CD8-positive, alpha-beta T cell (primary cell): ENCODE measurements at regions of chr6 and their contacts with region 1.

Region 1: GRCh38 chr6:99868074-99868702 is 125.8 kb downstream of the MCHR2 start:
- DNase-seq: peak; percentile 32 to 83 (median 69)
- ATAC-seq: no peak
- H3K4me3 ChIP-seq: no peak overlapping the region
- H3K4me3 Mint-ChIP-seq: no peak overlapping the region
- H3K27ac ChIP-seq: no peak overlapping the region
- H3K27ac Mint-ChIP-seq: no peak overlapping the region
- H3K4me1 ChIP-seq: no peaks in the 10 kb centered on the region
- H3K4me1 Mint-ChIP-seq: no peaks in the 10 kb centered on the region
- H3K27me3 ChIP-seq: no peaks in the 10 kb centered on the region
- H3K27me3 Mint-ChIP-seq: peaks cover 33% of the 10 kb centered on the region
- CTCF ChIP-seq: peak; percentile 81

Region 2: DNA sequence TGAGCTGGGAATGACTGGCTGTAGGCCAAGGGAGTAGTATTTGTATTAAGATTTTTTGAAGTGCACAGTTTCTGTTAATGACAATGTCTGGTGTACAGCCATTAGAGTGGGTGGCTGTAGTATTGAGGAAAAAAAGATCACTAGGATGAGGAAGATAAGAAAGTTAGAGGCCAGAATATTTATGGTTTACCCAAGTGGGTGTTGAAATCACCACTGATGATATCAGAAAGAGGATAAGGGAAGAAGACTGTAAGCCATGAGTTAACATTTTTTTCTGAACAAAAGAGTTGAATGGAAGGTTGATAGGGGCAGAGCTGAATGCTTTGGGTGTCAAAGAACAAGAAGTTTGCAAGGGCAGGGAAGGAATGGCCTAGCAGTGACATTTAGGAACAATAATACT is 156.9 kb before region 1 on chr6:
- CTCF ChIA-PET with region 1: no interaction called
- POLR2A ChIA-PET with region 1: no interaction called
- intact Hi-C with region 1: no loop called
- DNase-seq: no peak
- ATAC-seq: no peak
- H3K4me3 ChIP-seq: no peak overlapping the region
- H3K4me3 Mint-ChIP-seq: no peak overlapping the region
- H3K27ac ChIP-seq: no peak overlapping the region
- H3K27ac Mint-ChIP-seq: no peak overlapping the region
- H3K4me1 ChIP-seq: no peaks in the 10 kb centered on the region
- H3K4me1 Mint-ChIP-seq: no peaks in the 10 kb centered on the region
- H3K27me3 ChIP-seq: no peaks in the 10 kb centered on the region
- H3K27me3 Mint-ChIP-seq: peaks cover 8% of the 10 kb centered on the region
- CTCF ChIP-seq: no peak

Region 3: DNA sequence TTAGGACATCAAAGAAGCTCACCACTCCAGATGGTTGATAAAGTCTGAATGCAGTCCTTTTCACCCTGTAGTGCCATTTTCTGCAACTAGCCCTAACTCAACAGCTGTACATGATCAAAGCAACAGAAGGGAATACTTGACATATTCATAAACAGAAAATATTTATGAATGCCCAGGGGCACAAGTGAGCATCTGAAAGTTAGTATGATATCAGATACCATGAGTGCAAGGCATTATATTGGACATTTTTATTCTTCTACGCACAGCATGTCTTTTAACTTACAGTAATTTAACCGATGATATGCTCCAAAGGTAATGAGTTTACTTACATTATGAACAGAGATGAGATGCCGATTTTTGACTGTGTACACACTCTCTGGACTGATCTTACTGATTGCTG is 16.2 kb before region 1 on chr6:
- CTCF ChIA-PET with region 1: interaction called, 12 read pairs
- POLR2A ChIA-PET with region 1: no interaction called
- intact Hi-C with region 1: no loop called
- DNase-seq: no peak
- ATAC-seq: no peak
- H3K4me3 ChIP-seq: no peak overlapping the region
- H3K4me3 Mint-ChIP-seq: no peak overlapping the region
- H3K27ac ChIP-seq: no peak overlapping the region
- H3K27ac Mint-ChIP-seq: no peak overlapping the region
- H3K4me1 ChIP-seq: no peaks in the 10 kb centered on the region
- H3K4me1 Mint-ChIP-seq: no peaks in the 10 kb centered on the region
- H3K27me3 ChIP-seq: peaks cover 0 to 2% of the 10 kb centered on the region in 2 experiments
- H3K27me3 Mint-ChIP-seq: peaks cover 35% of the 10 kb centered on the region
- CTCF ChIP-seq: no peak

Region 4: GRCh38 chr6:99882128-99882702 is 14.0 kb after region 1 on chr6:
- CTCF ChIA-PET with region 1: interaction called, 46 read pairs
- POLR2A ChIA-PET with region 1: interaction called, 3 read pairs
- intact Hi-C with region 1: no loop called
- DNase-seq: peak in 2 of 9 experiments; percentile 17 to 41
- ATAC-seq: peak; percentile 62
- H3K4me3 ChIP-seq: no peak overlapping the region
- H3K4me3 Mint-ChIP-seq: no peak overlapping the region
- H3K27ac ChIP-seq: no peak overlapping the region
- H3K27ac Mint-ChIP-seq: no peak overlapping the region
- H3K4me1 ChIP-seq: peaks cover 5% of the 10 kb centered on the region
- H3K4me1 Mint-ChIP-seq: peaks cover 16% of the 10 kb centered on the region
- H3K27me3 ChIP-seq: no peaks in the 10 kb centered on the region
- H3K27me3 Mint-ChIP-seq: peaks cover 3% of the 10 kb centered on the region
- CTCF ChIP-seq: no peak

Region 5: GRCh38 chr6:99905209-99906106 is 37.3 kb after region 1 on chr6:
- CTCF ChIA-PET with region 1: interaction called, 53 read pairs
- POLR2A ChIA-PET with region 1: interaction called, 4 read pairs
- intact Hi-C with region 1: loop called (anchors 1 to 2 kb)
- DNase-seq: peak in 2 of 9 experiments; percentile 39 to 44
- ATAC-seq: no peak
- H3K4me3 ChIP-seq: no peak overlapping the region
- H3K4me3 Mint-ChIP-seq: no peak overlapping the region
- H3K27ac ChIP-seq: no peak overlapping the region
- H3K27ac Mint-ChIP-seq: no peak overlapping the region
- H3K4me1 ChIP-seq: no peaks in the 10 kb centered on the region
- H3K4me1 Mint-ChIP-seq: no peaks in the 10 kb centered on the region
- H3K27me3 ChIP-seq: peaks cover 0 to 3% of the 10 kb centered on the region in 2 experiments
- H3K27me3 Mint-ChIP-seq: peaks cover 6% of the 10 kb centered on the region
- CTCF ChIP-seq: peak; percentile 37

Region 6: GRCh38 chr6:100099189-100100074 is 231.2 kb after region 1 on chr6:
- CTCF ChIA-PET with region 1: interaction called, 17 read pairs
- POLR2A ChIA-PET with region 1: no interaction called
- intact Hi-C with region 1: loop called in 1 of 2 experiments (anchors 2 kb)
- DNase-seq: peak in 1 of 9 experiments; percentile 17
- ATAC-seq: no peak
- H3K4me3 ChIP-seq: no peak overlapping the region
- H3K4me3 Mint-ChIP-seq: no peak overlapping the region
- H3K27ac ChIP-seq: no peak overlapping the region
- H3K27ac Mint-ChIP-seq: no peak overlapping the region
- H3K4me1 ChIP-seq: no peaks in the 10 kb centered on the region
- H3K4me1 Mint-ChIP-seq: no peaks in the 10 kb centered on the region
- H3K27me3 ChIP-seq: no peaks in the 10 kb centered on the region
- H3K27me3 Mint-ChIP-seq: peaks cover 4% of the 10 kb centered on the region
- CTCF ChIP-seq: peak; percentile 12

Region 7: DNA sequence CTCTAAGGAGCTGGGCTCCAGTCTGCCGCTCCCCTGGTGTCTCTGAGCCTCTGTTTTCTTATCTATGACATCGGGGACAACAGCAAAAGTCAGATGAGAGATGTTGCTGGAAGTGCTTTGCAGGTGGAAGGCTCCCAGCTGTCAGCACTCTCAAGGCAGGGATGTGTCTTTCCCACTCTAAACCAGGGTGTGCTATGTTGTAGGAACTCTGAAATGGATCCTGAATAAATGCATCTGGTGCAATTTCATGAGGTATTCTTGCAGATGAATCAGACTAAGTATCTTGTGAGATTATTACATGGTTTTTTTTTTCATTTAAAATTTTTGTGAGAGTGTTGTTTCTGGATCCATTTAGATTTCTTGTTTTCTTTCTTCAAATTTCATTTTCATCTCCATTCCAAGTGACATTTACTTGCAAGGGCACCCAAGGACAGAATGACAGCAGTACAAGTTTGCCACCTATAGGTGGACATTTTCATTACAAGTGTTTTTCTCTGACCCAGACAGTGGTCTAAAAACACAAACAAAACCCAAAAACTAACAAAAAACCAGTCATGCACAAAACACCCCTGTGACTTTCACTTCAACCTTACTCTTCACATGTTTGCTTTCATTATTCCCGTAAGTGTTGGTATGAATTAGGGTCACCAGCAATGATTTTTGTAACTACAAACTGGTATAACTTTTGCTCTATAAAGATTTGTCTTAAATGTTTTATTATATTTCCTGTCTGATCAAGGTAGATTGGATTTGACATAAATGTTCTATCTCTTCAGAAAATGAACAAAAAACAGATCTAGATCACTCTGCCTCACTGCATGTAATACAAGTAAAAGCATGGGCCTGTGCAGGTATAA is 611.2 kb after region 1 on chr6:
- CTCF ChIA-PET with region 1: interaction called, 3 read pairs
- POLR2A ChIA-PET with region 1: no interaction called
- intact Hi-C with region 1: loop called (anchors 5 to 10 kb)
- DNase-seq: peak in 2 of 9 experiments; percentile 30 to 48
- ATAC-seq: no peak
- H3K4me3 ChIP-seq: no peak overlapping the region
- H3K4me3 Mint-ChIP-seq: no peak overlapping the region
- H3K27ac ChIP-seq: no peak overlapping the region
- H3K27ac Mint-ChIP-seq: no peak overlapping the region
- H3K4me1 ChIP-seq: no peaks in the 10 kb centered on the region
- H3K4me1 Mint-ChIP-seq: no peaks in the 10 kb centered on the region
- H3K27me3 ChIP-seq: no peaks in the 10 kb centered on the region
- H3K27me3 Mint-ChIP-seq: peaks cover 19% of the 10 kb centered on the region
- CTCF ChIP-seq: peak; percentile 51

Region 8: GRCh38 chr6:100664274-100665040 is 796.3 kb after region 1 on chr6:
- CTCF ChIA-PET with region 1: interaction called, 6 read pairs
- POLR2A ChIA-PET with region 1: no interaction called
- intact Hi-C with region 1: loop called (anchors 5 kb)
- DNase-seq: peak in 2 of 9 experiments; percentile 33 to 52
- ATAC-seq: peak; percentile 34
- H3K4me3 ChIP-seq: no peak overlapping the region
- H3K4me3 Mint-ChIP-seq: no peak overlapping the region
- H3K27ac ChIP-seq: peak overlapping the region in 1 of 2 experiments; percentile 37
- H3K27ac Mint-ChIP-seq: peak overlapping the region; percentile 83
- H3K4me1 ChIP-seq: no peaks in the 10 kb centered on the region
- H3K4me1 Mint-ChIP-seq: peaks cover 10% of the 10 kb centered on the region
- H3K27me3 ChIP-seq: no peaks in the 10 kb centered on the region
- H3K27me3 Mint-ChIP-seq: no peaks in the 10 kb centered on the region
- CTCF ChIP-seq: peak; percentile 79